Endothelial cell of umbilical vein (primary cell): ENCODE measurements at regions of chr10 and their contacts with region 1.

Region 1: DNA sequence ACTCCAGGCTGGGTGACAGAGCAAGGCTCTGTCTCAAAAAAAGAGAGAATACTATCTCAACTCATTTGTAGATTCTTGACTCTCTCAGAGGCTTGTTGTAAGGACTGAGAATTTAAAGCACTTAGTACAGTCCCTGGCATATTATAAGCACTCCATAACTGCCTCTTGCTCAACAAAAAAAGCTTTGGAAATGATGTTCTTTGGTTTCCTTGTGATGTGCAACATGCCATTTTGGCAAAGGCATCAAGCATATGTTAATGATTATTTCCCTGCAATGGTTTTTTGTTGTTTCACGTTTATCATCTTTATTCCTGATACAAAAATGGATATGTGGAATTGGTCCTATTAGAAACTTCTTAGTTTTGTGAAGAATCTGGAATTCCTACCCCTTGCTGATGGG is 15.7 kb downstream of the NOLC1 start:
- DNase-seq: no peak
- H3K4me3 ChIP-seq: no peak overlapping the region
- H3K27ac ChIP-seq: no peak overlapping the region
- H3K4me1 ChIP-seq: no peaks in the 10 kb centered on the region
- H3K27me3 ChIP-seq: no peaks in the 10 kb centered on the region
- CTCF ChIP-seq: no peak
- POLR2A ChIP-seq: no peak

Region 2: GRCh38 chr10:101617102-101617823 is 550.6 kb before region 1 on chr10:
- CTCF ChIA-PET with region 1: no interaction called
- POLR2A ChIA-PET with region 1: no interaction called
- dilution Hi-C with region 1: no loop called
- intact Hi-C with region 1: no loop called
- DNase-seq: no peak
- H3K4me3 ChIP-seq: no peak overlapping the region
- H3K27ac ChIP-seq: no peak overlapping the region
- H3K4me1 ChIP-seq: no peaks in the 10 kb centered on the region
- H3K27me3 ChIP-seq: no peaks in the 10 kb centered on the region
- CTCF ChIP-seq: no peak
- POLR2A ChIP-seq: no peak

Region 3: DNA sequence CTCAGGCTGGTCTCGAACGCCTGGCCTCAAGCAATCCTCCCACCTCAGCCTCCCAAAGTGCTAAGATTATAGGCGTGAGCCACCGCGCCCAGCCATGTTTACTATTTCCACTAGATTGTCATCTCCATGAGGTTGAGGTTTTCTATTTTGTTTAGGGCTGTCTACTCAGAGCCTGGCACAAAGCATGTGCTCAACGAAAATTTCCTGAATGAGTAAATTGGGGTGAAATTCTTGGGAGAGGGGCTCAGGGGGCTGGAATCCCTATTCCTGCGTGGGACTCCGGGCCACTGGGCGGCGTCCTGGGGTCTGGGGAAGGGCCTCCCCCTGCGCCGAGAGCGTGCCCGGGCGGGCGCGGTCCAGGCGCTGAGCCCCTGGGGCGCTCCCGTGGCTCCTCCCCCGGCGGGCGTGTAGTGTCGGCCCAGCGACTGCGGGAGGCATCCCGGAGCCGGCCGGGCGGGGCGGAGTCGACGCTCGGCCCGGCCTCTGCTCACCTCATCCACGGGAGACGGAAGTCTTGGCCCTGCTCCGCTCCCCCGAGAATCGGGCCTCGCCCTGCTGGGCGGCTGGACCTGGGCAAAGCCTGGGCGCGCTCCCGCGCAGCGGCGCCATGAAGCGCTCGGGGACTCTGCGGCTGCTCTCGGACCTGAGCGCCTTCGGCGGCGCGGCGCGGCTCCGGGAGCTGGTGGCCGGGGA is 102.8 kb before region 1 on chr10 and contains the start of gene HPS6:
- CTCF ChIA-PET with region 1: no interaction called
- POLR2A ChIA-PET with region 1: no interaction called
- dilution Hi-C with region 1: no loop called
- intact Hi-C with region 1: no loop called
- DNase-seq: peak; percentile 90
- H3K4me3 ChIP-seq: peak within 1 kb of the TSS; percentile 42 to 89 (median 62)
- H3K27ac ChIP-seq: peak within 1 kb of the TSS; percentile 43
- H3K4me1 ChIP-seq: peaks cover 14% of the 10 kb centered on the region
- H3K27me3 ChIP-seq: no peaks in the 10 kb centered on the region
- CTCF ChIP-seq: peak in 1 of 2 donors; percentile 20
- POLR2A ChIP-seq: peak; percentile 94
- total RNA-seq, gene HPS6: 18.5 TPM in 2 replicates

Region 4: DNA sequence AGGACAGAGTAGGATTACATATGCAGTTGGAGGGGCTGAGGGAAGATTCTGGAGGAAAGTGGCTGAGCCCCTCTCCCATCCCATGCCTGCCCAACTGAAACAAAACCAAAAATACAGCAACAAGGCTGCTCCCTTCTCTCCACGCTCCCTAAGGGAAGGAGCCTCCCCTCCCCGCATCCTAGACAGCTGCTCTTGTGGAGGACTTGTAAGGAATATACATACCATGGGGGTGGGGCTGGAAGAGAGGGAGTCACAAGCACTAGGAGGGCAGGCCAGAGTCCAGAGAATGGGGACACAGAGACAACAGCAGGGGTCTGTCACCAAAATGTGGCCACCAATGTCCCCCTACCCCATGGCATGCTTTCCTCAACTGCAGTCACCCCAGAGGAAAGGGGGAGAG is 60.9 kb before region 1 on chr10:
- CTCF ChIA-PET with region 1: no interaction called
- POLR2A ChIA-PET with region 1: no interaction called
- dilution Hi-C with region 1: no loop called
- intact Hi-C with region 1: no loop called
- DNase-seq: no peak
- H3K4me3 ChIP-seq: no peak overlapping the region
- H3K27ac ChIP-seq: no peak overlapping the region
- H3K4me1 ChIP-seq: peaks cover 9% of the 10 kb centered on the region
- H3K27me3 ChIP-seq: no peaks in the 10 kb centered on the region
- CTCF ChIP-seq: no peak
- POLR2A ChIP-seq: no peak

Region 5: DNA sequence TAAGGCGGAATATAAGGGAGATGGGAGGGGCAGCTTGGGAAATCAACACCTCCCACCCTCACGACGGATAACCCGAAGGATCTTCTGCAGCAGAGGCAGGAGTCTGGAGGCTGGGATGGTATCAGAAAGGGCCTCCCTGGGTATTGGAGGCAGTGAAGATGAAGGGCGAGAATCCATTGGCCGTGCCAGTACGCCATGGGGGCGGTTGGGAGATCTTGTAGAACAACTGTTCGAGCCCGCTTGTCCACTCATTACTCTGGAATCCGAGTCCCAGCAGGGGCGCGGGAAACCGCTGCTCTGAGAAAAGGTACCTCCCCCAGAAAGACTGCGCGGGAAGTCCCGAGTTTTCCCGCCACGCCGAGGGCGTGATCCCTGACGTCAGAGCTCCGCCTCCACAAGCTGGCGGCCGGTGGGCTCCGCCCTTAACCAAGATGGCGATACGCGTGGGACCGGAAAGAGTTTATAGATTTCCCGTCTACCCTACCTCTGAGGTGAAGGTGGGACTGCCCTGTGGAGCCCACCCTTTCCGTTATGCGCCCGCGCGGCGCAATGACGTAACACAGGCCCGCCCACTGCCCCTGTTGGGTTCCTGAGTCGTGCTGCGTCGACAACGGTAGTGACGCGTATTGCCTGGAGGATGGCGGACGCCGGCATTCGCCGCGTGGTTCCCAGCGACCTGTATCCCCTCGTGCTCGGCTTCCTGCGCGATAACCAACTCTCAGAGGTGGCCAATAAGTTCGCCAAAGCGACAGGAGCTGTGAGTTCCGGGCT is 15.9 kb before region 1 on chr10 and contains the start of gene NOLC1:
- CTCF ChIA-PET with region 1: interaction called, 11 read pairs
- POLR2A ChIA-PET with region 1: no interaction called
- dilution Hi-C with region 1: no loop called
- intact Hi-C with region 1: loop called (anchors 1 kb)
- DNase-seq: peak; percentile 99
- H3K4me3 ChIP-seq: peak within 1 kb of the TSS; percentile 24 to 71 (median 66)
- H3K27ac ChIP-seq: peak within 1 kb of the TSS; percentile 80
- H3K4me1 ChIP-seq: peaks cover 17% of the 10 kb centered on the region
- H3K27me3 ChIP-seq: no peaks in the 10 kb centered on the region
- CTCF ChIP-seq: no peak
- POLR2A ChIP-seq: peak; percentile 97
- total RNA-seq, gene NOLC1: 68.2 and 73.1 TPM in 2 replicates

Region 6: GRCh38 chr10:102208311-102209035 is 40.6 kb after region 1 on chr10:
- CTCF ChIA-PET with region 1: interaction called, 11 read pairs
- POLR2A ChIA-PET with region 1: no interaction called
- dilution Hi-C with region 1: no loop called
- intact Hi-C with region 1: no loop called
- DNase-seq: peak; percentile 55
- H3K4me3 ChIP-seq: no peak overlapping the region
- H3K27ac ChIP-seq: no peak overlapping the region
- H3K4me1 ChIP-seq: no peaks in the 10 kb centered on the region
- H3K27me3 ChIP-seq: peaks cover 12 to 27% of the 10 kb centered on the region in 2 experiments
- CTCF ChIP-seq: no peak
- POLR2A ChIP-seq: no peak

Region 7: GRCh38 chr10:102220612-102221011 is 52.8 kb after region 1 on chr10:
- CTCF ChIA-PET with region 1: interaction called, 41 read pairs
- POLR2A ChIA-PET with region 1: no interaction called
- dilution Hi-C with region 1: no loop called
- intact Hi-C with region 1: no loop called
- DNase-seq: no peak
- H3K4me3 ChIP-seq: no peak overlapping the region
- H3K27ac ChIP-seq: no peak overlapping the region
- H3K4me1 ChIP-seq: peaks cover 6% of the 10 kb centered on the region
- H3K27me3 ChIP-seq: peaks cover 37 to 48% of the 10 kb centered on the region in 2 experiments
- CTCF ChIP-seq: no peak
- POLR2A ChIP-seq: no peak

Region 8: GRCh38 chr10:102399217-102400089 is 231.6 kb after region 1 on chr10:
- CTCF ChIA-PET with region 1: interaction called, 42 read pairs
- POLR2A ChIA-PET with region 1: no interaction called
- dilution Hi-C with region 1: no loop called
- intact Hi-C with region 1: loop called (anchors 1 kb)
- DNase-seq: peak; percentile 82
- H3K4me3 ChIP-seq: peak overlapping the region in 2 of 3 experiments; percentile 15 to 48
- H3K27ac ChIP-seq: no peak overlapping the region
- H3K4me1 ChIP-seq: peaks cover 13% of the 10 kb centered on the region
- H3K27me3 ChIP-seq: no peaks in the 10 kb centered on the region
- CTCF ChIP-seq: peak; percentile 93 to 96
- POLR2A ChIP-seq: no peak

Region 9: GRCh38 chr10:102484021-102484420 is 316.2 kb after region 1 on chr10:
- CTCF ChIA-PET with region 1: interaction called, 25 read pairs
- POLR2A ChIA-PET with region 1: no interaction called
- dilution Hi-C with region 1: no loop called
- intact Hi-C with region 1: loop called (anchors 1 kb)
- DNase-seq: no peak
- H3K4me3 ChIP-seq: no peak overlapping the region
- H3K27ac ChIP-seq: no peak overlapping the region
- H3K4me1 ChIP-seq: no peaks in the 10 kb centered on the region
- H3K27me3 ChIP-seq: no peaks in the 10 kb centered on the region
- CTCF ChIP-seq: no peak
- POLR2A ChIP-seq: no peak